Activated T-helper 1 cell treated with anti-CD3 and anti-CD28 coated beads, Interleukin-12 subunit alpha, Interleukin-12 subunit beta, Interleukin-2, Interleukin-4 antibody, amounts not matched to agents 30 ng/mL and 10 ng/mL and 1 ng/mL, durations not matched to agents 14 hours and 24 hours and 36 hours (primary cell): ENCODE measurements at regions of chr6 and their contacts with region 1.

Region 1: DNA sequence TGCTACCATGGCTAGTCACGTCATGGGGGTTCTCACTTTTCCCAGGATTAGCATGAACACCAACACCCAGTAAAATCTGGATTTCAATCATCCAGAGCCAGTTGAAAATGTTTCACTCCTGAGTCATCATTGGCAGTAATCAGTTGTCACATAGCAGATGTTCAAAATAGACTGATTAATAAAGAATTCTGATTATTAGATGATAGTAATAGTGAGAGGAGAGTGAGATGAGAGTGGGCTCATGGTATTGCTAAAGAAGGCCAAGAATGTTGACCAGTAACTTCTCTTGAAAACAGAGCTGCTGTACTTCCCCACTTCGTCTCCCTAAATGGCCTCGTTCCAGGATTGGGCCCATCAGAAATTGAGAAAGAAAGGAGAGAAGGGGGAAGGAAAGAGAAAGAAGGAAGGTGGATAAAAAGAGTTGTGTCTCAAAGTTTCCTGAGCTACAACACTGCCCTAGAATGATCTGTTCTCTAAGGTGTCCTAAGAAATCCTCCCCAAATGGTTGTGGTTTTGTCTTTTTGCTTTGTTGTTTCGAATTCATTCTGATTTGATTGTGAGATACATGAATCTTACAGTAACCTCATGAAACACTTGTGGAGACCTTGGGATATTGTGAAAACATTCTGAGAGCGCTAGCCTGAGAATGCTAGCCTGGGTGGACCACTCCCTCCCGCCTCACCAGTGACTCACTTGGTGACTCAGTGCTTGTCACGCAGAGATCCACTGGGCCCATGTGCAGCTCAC is 502.2 kb upstream of the JARID2 start:
- DNase-seq: peak; percentile 59
- H3K4me3 Mint-ChIP-seq: peak overlapping the region; percentile 66
- H3K27ac Mint-ChIP-seq: peak overlapping the region; percentile 94
- H3K4me1 Mint-ChIP-seq: peaks cover 80% of the 10 kb centered on the region
- H3K27me3 Mint-ChIP-seq: no peaks in the 10 kb centered on the region

Region 2: DNA sequence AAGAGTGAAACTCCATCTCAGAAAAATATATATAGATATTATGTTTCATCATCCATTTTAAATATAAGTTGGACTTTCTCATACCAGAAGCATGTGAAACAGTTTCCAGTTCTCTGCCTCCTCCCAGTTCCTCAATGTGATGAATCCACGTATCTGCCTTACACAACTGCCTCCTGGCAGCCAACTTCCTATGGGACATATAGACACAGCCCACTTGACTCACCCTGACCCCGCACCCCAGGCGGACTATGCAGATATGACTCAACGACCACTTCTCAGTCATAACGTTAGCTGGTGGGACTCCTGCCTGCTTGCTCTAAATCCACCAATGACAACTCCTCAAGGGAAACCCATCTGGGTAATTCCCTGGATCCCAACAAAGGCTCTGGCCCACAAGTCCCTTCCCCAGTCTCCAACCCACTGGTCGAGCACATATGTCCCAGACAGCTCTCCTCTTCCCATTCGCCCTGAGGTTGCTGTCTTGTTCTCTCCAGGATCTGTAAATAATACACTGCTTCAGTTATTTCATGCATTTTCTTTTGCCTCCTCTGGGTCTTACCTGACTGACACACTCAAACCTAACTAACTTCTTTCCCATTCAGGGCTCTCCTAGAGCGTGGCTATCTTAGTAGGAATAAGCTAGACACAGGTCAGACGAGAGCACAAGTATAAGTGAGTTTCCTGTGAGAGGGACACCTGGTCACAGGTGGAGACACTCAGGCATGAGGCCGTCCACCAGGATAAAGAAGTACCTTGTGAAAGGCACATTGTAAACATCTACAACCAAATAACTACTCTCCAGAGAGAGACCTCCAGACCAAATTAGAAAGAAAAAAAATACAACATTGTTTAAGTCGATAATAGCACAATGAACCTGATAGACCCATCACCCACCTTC is 77.6 kb before region 1 on chr6:
- intact Hi-C with region 1: loop called (anchors 1 kb)
- DNase-seq: no peak
- H3K4me3 Mint-ChIP-seq: no peak overlapping the region
- H3K27ac Mint-ChIP-seq: no peak overlapping the region
- H3K4me1 Mint-ChIP-seq: peaks cover 28% of the 10 kb centered on the region
- H3K27me3 Mint-ChIP-seq: peaks cover 32% of the 10 kb centered on the region

Region 3: DNA sequence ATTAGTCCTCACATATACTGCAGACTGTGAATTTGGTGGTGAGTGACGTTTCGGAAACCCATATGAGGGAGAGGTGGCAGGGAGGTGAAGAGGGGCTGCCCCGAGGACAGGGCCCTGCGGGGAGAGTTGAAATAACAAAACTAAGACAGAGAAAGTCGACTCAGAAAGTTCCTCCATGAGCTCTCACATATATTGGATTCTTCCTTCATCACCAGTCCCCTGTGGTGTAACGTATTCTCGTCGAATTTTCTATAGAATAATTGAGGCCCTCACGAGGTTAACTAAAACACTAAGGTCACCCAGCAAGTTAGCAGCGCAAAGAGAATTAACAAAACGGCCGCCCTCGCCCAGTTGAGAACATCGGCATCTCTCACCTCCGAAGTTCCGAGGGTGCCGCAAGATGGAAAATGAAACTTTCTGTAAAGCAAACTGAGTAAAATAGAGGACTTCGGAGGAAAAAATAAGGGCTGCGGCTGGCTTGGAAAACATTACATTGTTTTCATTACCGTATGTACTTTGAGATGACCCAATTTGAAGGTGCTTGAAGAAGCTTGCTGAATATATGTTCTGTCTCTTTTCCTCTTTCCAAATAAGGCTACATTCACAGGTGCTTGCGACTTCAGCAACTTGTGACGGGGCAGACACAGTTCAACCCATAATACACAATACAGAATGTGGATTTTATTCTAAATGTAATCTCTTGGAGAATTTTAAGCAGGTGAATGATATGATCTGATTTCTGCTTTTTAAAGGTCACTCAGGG is 11.3 kb after region 1 on chr6:
- intact Hi-C with region 1: loop called (anchors 1 kb)
- DNase-seq: no peak
- H3K4me3 Mint-ChIP-seq: no peak overlapping the region
- H3K27ac Mint-ChIP-seq: peak overlapping the region; percentile 88
- H3K4me1 Mint-ChIP-seq: peaks cover 39% of the 10 kb centered on the region
- H3K27me3 Mint-ChIP-seq: no peaks in the 10 kb centered on the region

Region 4: DNA sequence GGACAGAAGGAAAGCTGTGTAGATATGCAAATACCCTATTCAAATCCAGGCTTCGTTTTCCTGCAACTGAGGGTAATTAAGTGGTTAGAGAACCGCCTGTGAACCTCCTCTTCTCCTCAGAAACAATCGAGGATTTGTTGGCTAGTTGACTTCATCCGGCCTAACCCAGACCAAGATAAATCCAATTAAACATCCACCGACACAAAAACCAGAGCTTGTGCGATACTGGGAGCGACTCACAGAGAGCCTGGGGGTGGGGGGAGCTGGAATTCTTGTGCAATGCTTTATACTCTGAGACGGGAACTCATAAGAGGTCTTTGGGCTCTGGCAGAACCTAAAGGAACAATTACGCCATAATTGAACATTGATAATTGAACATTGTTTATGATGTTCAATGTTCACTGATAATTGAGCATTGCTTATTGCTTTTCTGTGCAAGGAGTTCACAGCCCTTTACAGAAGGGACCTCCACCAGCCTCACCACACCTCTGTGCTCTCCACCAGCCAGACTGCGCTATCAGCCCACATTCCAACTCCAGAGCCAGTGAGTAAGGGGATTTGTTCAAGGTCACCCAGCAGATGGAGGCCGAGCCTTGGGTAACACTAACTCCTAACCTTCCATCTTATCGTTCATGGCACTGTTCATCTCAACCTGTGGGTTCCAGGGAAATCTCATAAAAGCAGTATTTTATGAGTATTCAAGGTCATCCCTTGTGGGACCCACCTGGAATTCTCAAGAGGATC is 72.7 kb after region 1 on chr6:
- intact Hi-C with region 1: loop called (anchors 1 kb)
- DNase-seq: no peak
- H3K4me3 Mint-ChIP-seq: no peak overlapping the region
- H3K27ac Mint-ChIP-seq: no peak overlapping the region
- H3K4me1 Mint-ChIP-seq: peaks cover 22% of the 10 kb centered on the region
- H3K27me3 Mint-ChIP-seq: peaks cover 3% of the 10 kb centered on the region

Region 5: DNA sequence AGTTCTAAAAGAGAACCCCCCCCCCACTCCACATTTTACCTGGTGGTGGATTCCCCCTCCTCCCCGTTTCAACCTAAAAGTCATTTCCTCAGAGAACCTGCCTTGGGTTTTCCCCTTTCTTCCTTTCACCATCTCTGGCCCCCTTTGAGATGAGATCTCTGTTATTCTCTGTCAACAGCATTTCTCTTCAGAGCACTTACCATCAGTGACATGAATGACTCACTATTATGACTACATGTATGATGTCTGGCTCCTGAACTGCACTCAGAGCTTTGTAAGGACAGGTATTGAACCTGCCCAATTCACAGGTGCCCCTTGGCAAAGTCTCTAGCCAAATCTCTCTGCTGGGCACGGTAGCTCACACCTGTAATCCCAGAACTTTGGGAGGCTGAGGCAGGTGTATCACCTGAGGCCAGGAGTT is 440.8 kb after region 1 on chr6:
- intact Hi-C with region 1: loop called (anchors 1 kb)
- DNase-seq: peak; percentile 25
- H3K4me3 Mint-ChIP-seq: no peak overlapping the region
- H3K27ac Mint-ChIP-seq: peak overlapping the region; percentile 94
- H3K4me1 Mint-ChIP-seq: peaks cover 16% of the 10 kb centered on the region
- H3K27me3 Mint-ChIP-seq: no peaks in the 10 kb centered on the region

Region 6: DNA sequence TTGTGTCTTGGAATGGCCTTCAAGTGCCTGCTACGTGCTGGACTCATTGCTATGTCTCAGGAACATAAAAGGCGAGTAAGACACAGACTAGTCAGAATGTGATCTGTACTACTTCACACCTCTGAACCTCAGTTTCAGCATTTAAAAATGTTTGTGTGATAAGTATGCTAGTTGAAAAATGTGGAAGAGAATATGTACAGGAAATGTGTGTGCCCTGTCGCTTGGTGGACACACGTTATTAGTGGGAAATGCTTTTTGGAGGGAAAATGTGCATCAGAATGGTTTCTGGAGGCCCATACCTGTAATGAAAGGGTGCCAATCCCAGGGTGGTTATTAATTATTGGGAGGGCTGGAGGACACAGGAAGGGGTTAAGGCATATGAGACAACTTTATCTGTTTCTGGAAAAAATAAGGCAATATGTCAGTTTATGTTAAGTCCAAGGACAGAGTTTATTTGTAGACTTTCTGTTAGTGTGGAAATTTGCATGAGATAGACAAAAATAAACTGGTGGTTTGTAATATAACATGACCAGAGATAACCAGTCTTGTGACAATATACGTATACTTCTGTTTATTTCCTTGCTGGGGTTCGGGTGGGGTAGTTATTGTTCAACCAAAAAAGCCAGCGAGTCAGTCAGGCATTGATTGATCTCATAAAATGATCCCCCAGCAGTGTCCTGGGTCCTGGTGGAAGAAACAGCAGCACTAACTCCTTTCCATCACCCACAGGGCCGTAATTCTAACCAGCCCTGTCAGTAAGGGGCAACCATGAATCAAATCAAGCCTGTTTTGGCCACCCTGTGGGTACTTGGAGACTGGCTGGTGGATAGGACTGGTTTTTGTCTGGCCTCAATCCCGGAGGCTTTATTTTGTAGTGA is 620.1 kb after region 1 on chr6:
- intact Hi-C with region 1: no loop called
- DNase-seq: no peak
- H3K4me3 Mint-ChIP-seq: no peak overlapping the region
- H3K27ac Mint-ChIP-seq: no peak overlapping the region
- H3K4me1 Mint-ChIP-seq: peaks cover 46% of the 10 kb centered on the region
- H3K27me3 Mint-ChIP-seq: no peaks in the 10 kb centered on the region